Naive thymus-derived CD4-positive, alpha-beta T cell (primary cell): ENCODE measurements at regions of chr17 and their contacts with region 1.

Region 1: GRCh38 chr17:31549525-31550388 is 158.3 kb downstream of the RAB11FIP4 start:
- DNase-seq: peak; percentile 75 to 98 (median 85)
- ATAC-seq: peak; percentile 93
- H3K4me3 ChIP-seq: peak overlapping the region; percentile 77
- H3K4me3 Mint-ChIP-seq: peak overlapping the region; percentile 84 to 94 (median 92)
- H3K27ac ChIP-seq: peak overlapping the region; percentile 75
- H3K27ac Mint-ChIP-seq: peak overlapping the region; percentile 71 to 93 (median 84)
- H3K4me1 ChIP-seq: peaks cover 0 to 8% of the 10 kb centered on the region in 2 donors
- H3K4me1 Mint-ChIP-seq: peaks cover 8 to 25% (median 18%) of the 10 kb centered on the region in 7 donors
- H3K27me3 ChIP-seq: no peaks in the 10 kb centered on the region
- H3K27me3 Mint-ChIP-seq: peaks cover 0 to 24% (median 0%) of the 10 kb centered on the region in 5 donors

Region 2: DNA sequence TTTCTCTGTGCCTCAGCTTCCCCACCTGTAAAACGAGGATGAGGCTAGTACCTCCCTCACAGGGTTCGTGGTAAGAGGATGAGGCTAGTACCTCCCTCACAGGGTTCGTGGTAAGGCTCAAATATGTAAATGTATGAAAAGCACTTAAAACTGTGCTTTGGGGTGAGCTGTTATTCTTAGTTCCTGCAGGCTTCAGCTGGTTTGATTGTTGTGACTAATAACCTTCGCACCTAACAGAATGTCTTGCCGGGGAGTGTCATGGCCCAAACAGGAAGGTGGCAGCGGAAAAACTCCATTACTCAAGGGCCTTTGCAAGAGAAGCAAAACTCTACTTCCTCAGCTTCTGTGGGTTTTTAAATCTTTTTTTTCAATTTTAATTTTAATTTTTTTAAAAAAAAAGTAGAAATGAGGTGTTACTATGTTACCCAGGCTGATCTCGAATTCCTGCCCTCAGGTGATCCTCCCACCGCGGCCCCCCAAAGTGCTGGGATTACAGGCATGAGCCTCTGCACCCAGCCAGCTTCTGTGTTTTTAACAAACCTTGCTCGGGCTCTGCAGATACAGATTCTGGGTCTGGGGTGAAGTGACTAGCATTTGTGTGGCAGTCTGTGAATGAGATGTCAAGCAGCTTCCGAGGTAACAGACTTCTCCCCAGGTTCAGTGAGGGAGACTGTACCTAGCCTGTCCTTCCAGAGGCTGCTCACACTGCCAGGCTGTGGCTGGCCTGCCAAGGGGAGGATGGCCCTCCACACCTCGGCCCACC is 55.3 kb before region 1 on chr17:
- CTCF ChIA-PET with region 1: interaction called, 3 read pairs
- POLR2A ChIA-PET with region 1: no interaction called
- intact Hi-C with region 1: loop called (anchors 2 kb)
- DNase-seq: peak in 8 of 9 donors; percentile 53 to 82 (median 73)
- ATAC-seq: peak; percentile 82
- H3K4me3 ChIP-seq: peak overlapping the region; percentile 33
- H3K4me3 Mint-ChIP-seq: peak overlapping the region; percentile 76 to 98 (median 90)
- H3K27ac ChIP-seq: peak overlapping the region; percentile 90
- H3K27ac Mint-ChIP-seq: peak overlapping the region; percentile 95 to 98 (median 97)
- H3K4me1 ChIP-seq: peaks cover 71 to 84% of the 10 kb centered on the region in 2 donors
- H3K4me1 Mint-ChIP-seq: peaks cover 81 to 100% (median 94%) of the 10 kb centered on the region in 7 donors
- H3K27me3 ChIP-seq: no peaks in the 10 kb centered on the region
- H3K27me3 Mint-ChIP-seq: no peaks in the 10 kb centered on the region

Region 3: DNA sequence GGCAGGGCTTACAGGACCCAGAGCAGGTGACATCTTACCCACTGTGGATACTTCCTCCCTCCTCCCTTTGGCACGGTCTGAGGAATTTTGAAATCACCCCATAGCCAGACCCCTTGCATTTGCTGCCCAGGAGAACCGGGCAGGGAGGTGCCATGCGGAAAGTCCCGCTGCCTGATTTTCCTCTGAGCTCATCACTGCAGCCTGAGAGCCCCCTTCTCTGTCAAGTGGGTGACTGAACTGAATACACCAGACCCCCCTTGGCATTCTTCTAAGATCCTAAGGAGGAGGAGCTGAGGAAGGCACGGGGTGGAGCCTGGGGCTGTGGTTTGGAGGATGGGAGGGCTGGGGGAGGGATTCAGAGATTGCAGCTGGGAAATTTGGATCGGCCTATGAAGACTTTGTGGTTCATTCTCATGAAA is 15.1 kb after region 1 on chr17:
- CTCF ChIA-PET with region 1: no interaction called
- POLR2A ChIA-PET with region 1: no interaction called
- intact Hi-C with region 1: no loop called
- DNase-seq: no peak
- ATAC-seq: no peak
- H3K4me3 ChIP-seq: no peak overlapping the region
- H3K4me3 Mint-ChIP-seq: no peak overlapping the region
- H3K27ac ChIP-seq: no peak overlapping the region
- H3K27ac Mint-ChIP-seq: no peak overlapping the region
- H3K4me1 ChIP-seq: no peaks in the 10 kb centered on the region
- H3K4me1 Mint-ChIP-seq: peaks cover 7 to 22% (median 16%) of the 10 kb centered on the region in 7 donors
- H3K27me3 ChIP-seq: no peaks in the 10 kb centered on the region
- H3K27me3 Mint-ChIP-seq: peaks cover 0 to 19% (median 0%) of the 10 kb centered on the region in 5 donors

Region 4: DNA sequence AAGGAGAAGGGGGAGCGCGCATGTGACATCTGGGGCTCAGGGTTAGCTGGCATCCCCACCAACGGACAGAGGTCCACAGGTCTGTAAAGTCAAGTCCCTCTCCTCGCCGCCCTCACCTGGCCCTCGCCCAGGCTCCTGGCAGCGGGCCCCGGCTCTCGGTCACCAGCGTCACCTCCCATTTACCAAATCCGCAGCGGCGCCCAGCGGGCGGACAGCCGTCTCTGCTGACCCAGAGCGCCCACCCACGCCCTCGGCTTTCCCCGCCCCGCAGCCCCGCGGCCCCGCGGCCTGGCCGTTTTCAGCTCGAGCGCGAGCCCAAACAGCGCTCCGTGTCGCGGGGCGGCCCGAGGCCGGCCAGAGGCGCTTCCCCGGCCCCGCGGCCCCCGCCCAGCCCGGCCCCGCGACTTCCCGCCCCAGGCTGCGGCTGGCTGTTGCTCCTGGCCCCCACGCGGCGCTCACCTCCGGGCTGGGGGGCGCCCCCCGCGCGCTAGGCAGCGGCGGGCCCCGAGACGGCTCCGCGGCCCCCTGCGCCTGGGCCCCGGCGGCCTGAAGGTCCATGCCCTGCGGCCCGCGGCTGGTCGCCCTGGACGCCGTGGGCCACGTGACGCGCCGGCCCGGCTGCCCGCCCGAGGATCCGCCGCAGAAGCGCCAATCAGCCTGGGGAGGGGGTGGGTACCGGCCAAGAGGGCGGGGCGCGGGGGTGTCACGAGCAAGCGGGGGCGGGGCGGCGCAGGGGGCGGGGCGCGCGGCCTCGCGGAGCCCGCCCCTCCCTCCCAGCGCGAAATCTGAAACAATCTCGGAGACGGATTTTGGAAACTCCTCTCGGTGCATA is 309.1 kb after region 1 on chr17 and contains the start of gene COPRS:
- CTCF ChIA-PET with region 1: no interaction called
- POLR2A ChIA-PET with region 1: no interaction called
- intact Hi-C with region 1: loop called (anchors 5 kb)
- DNase-seq: peak; percentile 46 to 83 (median 74)
- ATAC-seq: peak; percentile 97
- H3K4me3 ChIP-seq: peak within 1 kb of the TSS; percentile 60
- H3K4me3 Mint-ChIP-seq: peak within 1 kb of the TSS; percentile 79 to 93 (median 86)
- H3K27ac ChIP-seq: peak within 1 kb of the TSS; percentile 51
- H3K27ac Mint-ChIP-seq: peak within 1 kb of the TSS; percentile 3 to 87 (median 75)
- H3K4me1 ChIP-seq: peaks cover 0 to 7% of the 10 kb centered on the region in 2 donors
- H3K4me1 Mint-ChIP-seq: peaks cover 11 to 19% (median 15%) of the 10 kb centered on the region in 7 donors
- H3K27me3 ChIP-seq: no peaks in the 10 kb centered on the region
- H3K27me3 Mint-ChIP-seq: no peaks in the 10 kb centered on the region
- total RNA-seq, gene COPRS: 2.2 to 20.9 (median 4.2) TPM